ENCODE measurements at regions of chrX and their contacts with region 1.

Region 1: DNA sequence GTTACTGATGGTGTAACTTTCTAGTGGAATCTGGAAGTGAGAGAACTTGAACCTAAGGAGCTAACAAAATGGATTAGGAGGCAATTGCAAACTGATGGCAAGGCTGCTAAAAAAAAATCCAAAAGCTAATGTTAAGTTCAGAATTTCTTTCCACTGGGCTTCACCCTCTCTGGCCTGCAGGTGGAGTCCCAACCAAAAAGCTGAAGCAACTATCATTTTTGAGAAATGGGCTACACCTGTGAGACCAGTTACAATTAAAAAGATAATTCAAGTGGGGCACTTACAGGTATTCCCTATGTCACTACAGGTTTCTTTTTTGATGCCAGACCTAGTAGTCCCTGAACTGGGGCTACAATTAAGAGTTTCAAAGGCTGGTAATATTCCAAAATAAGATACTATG is 142.1 kb upstream of the FTHL17 start:
- DNase-seq: no peak
- ATAC-seq: no peak
- H3K4me3 ChIP-seq: no peak overlapping the region
- H3K4me3 Mint-ChIP-seq: no peak overlapping the region
- H3K27ac ChIP-seq: no peak overlapping the region
- H3K27ac Mint-ChIP-seq: no peak overlapping the region
- H3K4me1 ChIP-seq: no peaks in the 10 kb centered on the region
- H3K4me1 Mint-ChIP-seq: peaks cover 0 to 8% (median 0%) of the 10 kb centered on the region in 7 donors
- H3K27me3 ChIP-seq: no peaks in the 10 kb centered on the region
- H3K27me3 Mint-ChIP-seq: no peaks in the 10 kb centered on the region

Region 2: DNA sequence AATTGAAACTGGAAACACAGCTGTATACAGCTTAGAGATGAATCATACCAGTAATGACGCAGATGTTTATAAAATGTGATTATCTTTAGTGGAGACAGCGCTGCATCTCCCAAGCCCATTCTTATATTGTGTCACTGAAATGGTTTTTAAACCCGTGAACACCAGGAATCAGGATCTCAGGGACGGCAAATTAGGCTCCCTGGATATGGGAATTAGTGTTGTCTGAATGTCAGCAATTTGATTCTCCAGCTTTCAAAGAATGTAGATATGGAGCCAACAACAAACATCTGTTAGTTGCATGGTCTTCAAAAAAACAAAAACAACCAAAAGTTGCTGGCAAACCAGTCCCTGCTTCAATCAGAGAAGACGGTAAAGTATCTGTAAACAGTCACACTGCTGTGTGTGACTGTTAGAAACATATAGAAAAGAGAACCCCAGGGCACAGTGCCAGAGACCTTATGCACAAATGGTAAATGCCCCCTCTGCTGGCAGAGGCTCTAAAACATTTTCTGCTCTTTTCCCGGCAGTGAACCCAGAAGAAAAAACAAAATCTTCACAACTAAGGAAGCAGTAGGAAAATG is 209.8 kb after region 1 on chrX:
- CTCF ChIA-PET with region 1: no interaction called
- POLR2A ChIA-PET with region 1: no interaction called
- intact Hi-C with region 1: loop called in 1 of 2 experiments (anchors 10 kb)
- DNase-seq: peak in 1 of 9 donors; percentile 15
- ATAC-seq: no peak
- H3K4me3 ChIP-seq: no peak overlapping the region
- H3K4me3 Mint-ChIP-seq: no peak overlapping the region
- H3K27ac ChIP-seq: no peak overlapping the region
- H3K27ac Mint-ChIP-seq: no peak overlapping the region
- H3K4me1 ChIP-seq: no peaks in the 10 kb centered on the region
- H3K4me1 Mint-ChIP-seq: no peaks in the 10 kb centered on the region
- H3K27me3 ChIP-seq: no peaks in the 10 kb centered on the region
- H3K27me3 Mint-ChIP-seq: no peaks in the 10 kb centered on the region

Region 3: DNA sequence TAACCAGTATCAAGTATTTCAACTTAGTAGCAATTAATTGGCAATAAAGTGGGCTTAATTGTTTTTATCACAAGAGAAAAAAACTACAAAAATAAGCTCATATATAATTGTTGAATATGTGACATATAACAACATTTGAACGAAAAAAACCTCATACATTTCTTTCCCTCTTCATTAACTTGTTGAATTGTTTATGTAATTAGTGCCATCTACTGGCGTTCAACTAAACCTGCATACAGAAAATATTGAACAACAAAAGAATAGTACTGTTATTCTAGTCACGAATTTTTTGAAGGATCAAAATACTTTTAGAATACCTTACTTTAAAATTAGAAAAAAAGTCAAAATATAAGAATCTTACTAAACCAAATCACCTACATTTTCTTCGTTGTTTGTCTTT is 444.4 kb after region 1 on chrX:
- CTCF ChIA-PET with region 1: no interaction called
- POLR2A ChIA-PET with region 1: no interaction called
- intact Hi-C with region 1: loop called in 1 of 2 experiments (anchors 10 kb)
- DNase-seq: peak in 1 of 9 donors; percentile 4
- ATAC-seq: no peak
- H3K4me3 ChIP-seq: no peak overlapping the region
- H3K4me3 Mint-ChIP-seq: no peak overlapping the region
- H3K27ac ChIP-seq: no peak overlapping the region
- H3K27ac Mint-ChIP-seq: no peak overlapping the region
- H3K4me1 ChIP-seq: no peaks in the 10 kb centered on the region
- H3K4me1 Mint-ChIP-seq: no peaks in the 10 kb centered on the region
- H3K27me3 ChIP-seq: no peaks in the 10 kb centered on the region
- H3K27me3 Mint-ChIP-seq: no peaks in the 10 kb centered on the region

Measured in naive thymus-derived CD4-positive, alpha-beta T cell (primary cell).